SK-N-SH (cell line): ENCODE measurements at regions of chr17 and their contacts with region 1.

Region 1: DNA sequence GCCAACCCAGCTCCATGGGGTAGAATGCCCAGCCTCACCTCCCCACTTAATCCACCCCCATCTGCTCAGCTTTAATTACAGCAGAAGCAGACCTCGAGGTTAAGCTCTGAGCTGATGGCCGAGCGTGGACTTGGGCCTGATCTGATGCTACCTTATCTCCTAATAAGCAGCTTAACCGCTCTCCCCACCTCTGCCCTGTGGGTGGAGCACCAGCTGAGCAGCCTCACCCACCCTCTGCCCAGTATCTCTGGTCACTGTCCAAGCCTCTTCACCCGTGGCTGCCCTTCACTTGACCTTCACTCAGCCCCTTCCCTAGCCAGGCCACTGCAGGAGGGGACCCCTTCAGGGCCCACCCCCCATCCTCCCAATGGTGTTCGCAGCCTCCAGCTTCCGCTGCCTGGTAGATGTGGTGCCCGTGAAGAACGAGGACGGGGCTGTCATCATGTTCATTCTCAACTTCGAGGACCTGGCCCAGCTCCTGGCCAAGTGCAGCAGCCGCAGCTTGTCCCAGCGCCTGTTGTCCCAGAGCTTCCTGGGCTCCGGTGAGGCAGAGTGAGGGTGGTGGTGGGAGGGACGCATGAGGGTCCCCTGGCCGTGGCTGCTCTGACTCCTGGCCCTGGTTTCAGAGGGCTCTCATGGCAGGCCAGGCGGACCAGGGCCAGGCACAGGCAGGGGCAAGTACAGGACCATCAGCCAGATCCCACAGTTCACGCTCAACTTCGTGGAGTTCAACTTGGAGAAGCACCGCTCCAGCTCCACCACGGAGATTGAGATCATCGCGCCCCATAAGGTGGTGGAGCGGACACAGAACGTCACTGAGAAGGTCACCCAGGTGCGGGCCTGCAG is 6.8 kb downstream of the KCNH6 start:
- DNase-seq: peak; percentile 74
- H3K4me3 ChIP-seq: no peak overlapping the region
- H3K27ac ChIP-seq: peak overlapping the region in 1 of 2 experiments; percentile 32; a peak in 1 of 4 replicates
- H3K4me1 ChIP-seq: peaks cover 0 to 29% of the 10 kb centered on the region in 2 experiments; a peak in 1 of 4 replicates
- H3K27me3 ChIP-seq: 0 out of 2 replicates have a peak, but pooled peaks cover 17% of the 10 kb centered on the region
- CTCF ChIP-seq: no peak
- EP300 ChIP-seq: no peak
- RAD21 ChIP-seq: 0 out of 2 replicates have a peak, but pooled peaks have one; percentile 9

Region 2: GRCh38 chr17:63445979-63446691 is 83.8 kb before region 1 on chr17 and contains the start of gene CYB561:
- CTCF ChIA-PET with region 1: interaction called, 10 read pairs
- POLR2A ChIA-PET with region 1: interaction called, 3 read pairs
- DNase-seq: peak; percentile 97
- H3K4me3 ChIP-seq: peak within 1 kb of the TSS; percentile 56 to 64
- H3K27ac ChIP-seq: peak within 1 kb of the TSS; percentile 19 to 99; a peak in 2 of 4 replicates
- H3K4me1 ChIP-seq: peaks cover 8 to 69% of the 10 kb centered on the region in 2 experiments
- H3K27me3 ChIP-seq: no peaks in the 10 kb centered on the region
- CTCF ChIP-seq: peak; percentile 54
- EP300 ChIP-seq: no peak
- RAD21 ChIP-seq: peak; percentile 32
- polyA plus RNA-seq, gene CYB561: 28.3 and 38.6 TPM in 2 replicates

Region 3: DNA sequence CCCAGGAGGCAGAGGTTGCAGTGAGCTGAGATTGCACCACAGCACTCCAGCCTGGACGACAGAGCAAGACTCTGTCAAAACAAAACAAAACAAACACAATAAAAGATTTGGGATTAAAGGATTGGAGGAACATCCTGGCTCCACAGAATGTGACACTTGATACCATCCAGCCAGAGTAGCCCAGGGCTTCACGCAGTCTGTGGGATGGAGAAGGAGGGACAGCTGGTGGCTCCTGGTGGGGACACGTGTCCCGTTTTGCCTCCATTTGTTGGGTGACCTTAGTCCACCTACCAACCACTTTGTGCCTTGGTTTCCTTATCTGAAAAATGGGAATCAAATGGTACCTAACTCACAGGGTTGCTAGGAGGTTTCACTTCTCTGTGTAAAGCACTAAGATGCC is 71.5 kb before region 1 on chr17:
- CTCF ChIA-PET with region 1: no interaction called
- POLR2A ChIA-PET with region 1: no interaction called
- DNase-seq: peak; percentile 13
- H3K4me3 ChIP-seq: no peak overlapping the region
- H3K27ac ChIP-seq: no peak overlapping the region
- H3K4me1 ChIP-seq: peaks cover 11 to 26% of the 10 kb centered on the region in 2 experiments
- H3K27me3 ChIP-seq: no peaks in the 10 kb centered on the region
- CTCF ChIP-seq: no peak
- EP300 ChIP-seq: no peak
- RAD21 ChIP-seq: no peak

Region 4: GRCh38 chr17:63512896-63513644 is 16.9 kb before region 1 on chr17:
- CTCF ChIA-PET with region 1: no interaction called
- POLR2A ChIA-PET with region 1: no interaction called
- DNase-seq: no peak
- H3K4me3 ChIP-seq: no peak overlapping the region
- H3K27ac ChIP-seq: no peak overlapping the region
- H3K4me1 ChIP-seq: 0 out of 4 replicates have a peak, but pooled peaks cover 0 to 2% of the 10 kb centered on the region in 2 experiments
- H3K27me3 ChIP-seq: peaks cover 27% of the 10 kb centered on the region
- CTCF ChIP-seq: no peak
- EP300 ChIP-seq: no peak
- RAD21 ChIP-seq: no peak

Region 5: GRCh38 chr17:63558448-63558847 is 28.5 kb after region 1 on chr17:
- CTCF ChIA-PET with region 1: no interaction called
- POLR2A ChIA-PET with region 1: no interaction called
- DNase-seq: no peak
- H3K4me3 ChIP-seq: no peak overlapping the region
- H3K27ac ChIP-seq: no peak overlapping the region
- H3K4me1 ChIP-seq: peaks cover 0 to 9% of the 10 kb centered on the region in 2 experiments; a peak in 2 of 4 replicates
- H3K27me3 ChIP-seq: no peaks in the 10 kb centered on the region
- CTCF ChIP-seq: no peak
- EP300 ChIP-seq: no peak
- RAD21 ChIP-seq: no peak